ENCODE measurements at regions of chr16 and their contacts with region 1.

Region 1: DNA sequence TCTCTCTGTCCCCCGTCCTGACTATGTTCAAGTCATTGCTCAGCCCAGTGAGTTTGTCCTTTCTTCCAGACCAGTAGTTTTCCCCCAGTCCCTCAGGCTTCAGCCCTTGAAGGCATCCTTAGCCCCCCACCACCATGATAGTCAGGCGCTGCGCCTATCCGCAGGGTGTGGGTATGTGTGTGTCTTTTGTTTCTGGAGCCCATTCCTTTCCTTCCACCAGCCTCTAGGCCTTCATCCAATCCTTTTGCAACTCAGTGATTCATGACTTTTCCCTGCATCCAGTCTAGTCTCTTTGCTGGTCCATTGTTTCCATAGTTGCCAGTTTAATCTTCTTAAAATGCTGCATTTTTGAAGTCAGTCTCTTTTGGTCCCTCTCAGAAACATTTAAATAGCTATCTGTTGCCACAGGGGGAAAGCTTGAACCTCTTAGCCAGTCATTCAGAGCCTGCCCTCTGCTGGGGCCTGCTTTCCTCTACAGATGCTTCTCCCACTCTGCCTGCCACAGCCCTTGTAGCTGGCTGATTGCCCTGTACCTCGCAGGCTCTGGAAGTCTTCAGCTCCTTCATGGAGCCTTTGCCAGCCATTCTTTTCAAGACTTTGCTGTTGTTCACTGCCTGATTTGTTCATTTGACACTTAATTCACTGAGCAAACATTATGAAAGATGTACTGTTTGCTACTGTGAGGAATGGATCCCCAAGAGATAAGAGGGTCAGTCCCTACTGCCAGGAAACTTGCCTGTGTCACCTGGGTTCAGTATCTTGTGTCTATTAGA is 55.9 kb upstream of the ADCY7 start:
- DNase-seq: peak; percentile 82 to 93 (median 88)
- ATAC-seq: peak; percentile 94 to 96
- H3K4me3 ChIP-seq: no peak overlapping the region
- H3K27ac ChIP-seq: no peak overlapping the region
- H3K4me1 ChIP-seq: peaks cover 5% of the 10 kb centered on the region
- H3K27me3 ChIP-seq: no peaks in the 10 kb centered on the region

Region 2: GRCh38 chr16:50024684-50025536 is 185.5 kb before region 1 on chr16 and contains the start of gene CNEP1R1:
- intact Hi-C with region 1: loop called in 2 of 4 experiments (anchors 10 kb)
- DNase-seq: peak; percentile 94 to 97 (median 97)
- ATAC-seq: peak; percentile 100
- H3K4me3 ChIP-seq: peak within 1 kb of the TSS; percentile 99
- H3K27ac ChIP-seq: peak within 1 kb of the TSS; percentile 73
- H3K4me1 ChIP-seq: no peaks in the 10 kb centered on the region
- H3K27me3 ChIP-seq: no peaks in the 10 kb centered on the region
- total RNA-seq, gene CNEP1R1: 14.1 to 20.6 (median 19.1) TPM

Region 3: GRCh38 chr16:50152807-50153452 is 57.5 kb before region 1 on chr16 and contains the start of gene TENT4B:
- intact Hi-C with region 1: loop called in 2 of 4 experiments (anchors 5 to 10 kb)
- DNase-seq: peak; percentile 88 to 96 (median 94)
- ATAC-seq: peak; percentile 97
- H3K4me3 ChIP-seq: peak within 1 kb of the TSS; percentile 80
- H3K27ac ChIP-seq: peak within 1 kb of the TSS; percentile 90
- H3K4me1 ChIP-seq: peaks cover 4% of the 10 kb centered on the region
- H3K27me3 ChIP-seq: no peaks in the 10 kb centered on the region
- total RNA-seq, gene TENT4B: 6.3 to 8.4 (median 7.3) TPM

Region 4: GRCh38 chr16:50326949-50327402 is 116.5 kb after region 1 on chr16:
- intact Hi-C with region 1: no loop called
- DNase-seq: peak in 1 of 3 donors; percentile 65
- ATAC-seq: peak in 1 of 2 donors; percentile 29
- H3K4me3 ChIP-seq: no peak overlapping the region
- H3K27ac ChIP-seq: no peak overlapping the region
- H3K4me1 ChIP-seq: no peaks in the 10 kb centered on the region
- H3K27me3 ChIP-seq: no peaks in the 10 kb centered on the region

Region 5: DNA sequence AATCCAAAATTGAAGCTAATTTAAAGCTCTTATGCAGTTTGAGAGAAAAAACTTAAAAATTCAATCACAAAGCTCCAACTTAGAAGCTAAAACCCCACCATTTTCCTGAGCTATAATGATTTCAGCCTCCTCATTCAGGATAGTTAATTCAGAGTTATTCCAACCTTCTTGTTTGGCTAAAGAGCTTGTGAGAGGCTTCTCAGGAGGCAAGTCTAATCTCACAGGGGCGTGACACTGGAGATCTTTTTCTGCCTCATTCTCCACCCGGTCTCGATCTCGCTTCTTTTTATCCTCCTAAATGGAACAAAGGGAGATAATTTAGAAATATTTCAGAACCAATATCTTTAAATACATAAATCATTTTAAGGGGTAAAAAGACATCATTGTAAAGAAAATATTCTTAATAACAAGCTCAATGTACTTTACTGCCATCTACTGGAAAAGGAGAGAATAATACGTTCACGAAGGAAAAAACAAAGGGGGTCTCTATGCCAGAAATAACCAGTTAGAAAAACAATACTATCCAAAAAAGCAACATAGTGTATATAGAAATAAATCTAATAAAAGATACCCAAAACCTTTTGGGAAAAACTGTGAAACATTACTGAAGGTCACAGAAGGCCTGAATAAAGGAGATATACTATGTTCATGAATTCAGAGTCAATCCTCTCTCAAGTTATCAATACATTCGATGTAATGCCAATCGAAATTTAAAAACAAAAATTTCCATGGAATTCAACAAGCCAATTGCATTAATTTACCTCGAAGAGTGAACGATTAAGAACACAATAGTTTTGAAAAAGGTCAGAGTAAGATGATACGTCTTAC is 144.4 kb after region 1 on chr16:
- intact Hi-C with region 1: loop called in 2 of 4 experiments (anchors 10 kb)
- DNase-seq: no peak
- ATAC-seq: no peak
- H3K4me3 ChIP-seq: no peak overlapping the region
- H3K27ac ChIP-seq: no peak overlapping the region
- H3K4me1 ChIP-seq: no peaks in the 10 kb centered on the region
- H3K27me3 ChIP-seq: no peaks in the 10 kb centered on the region